ENCODE measurements at regions of chr14 and their contacts with region 1.

Region 1: DNA sequence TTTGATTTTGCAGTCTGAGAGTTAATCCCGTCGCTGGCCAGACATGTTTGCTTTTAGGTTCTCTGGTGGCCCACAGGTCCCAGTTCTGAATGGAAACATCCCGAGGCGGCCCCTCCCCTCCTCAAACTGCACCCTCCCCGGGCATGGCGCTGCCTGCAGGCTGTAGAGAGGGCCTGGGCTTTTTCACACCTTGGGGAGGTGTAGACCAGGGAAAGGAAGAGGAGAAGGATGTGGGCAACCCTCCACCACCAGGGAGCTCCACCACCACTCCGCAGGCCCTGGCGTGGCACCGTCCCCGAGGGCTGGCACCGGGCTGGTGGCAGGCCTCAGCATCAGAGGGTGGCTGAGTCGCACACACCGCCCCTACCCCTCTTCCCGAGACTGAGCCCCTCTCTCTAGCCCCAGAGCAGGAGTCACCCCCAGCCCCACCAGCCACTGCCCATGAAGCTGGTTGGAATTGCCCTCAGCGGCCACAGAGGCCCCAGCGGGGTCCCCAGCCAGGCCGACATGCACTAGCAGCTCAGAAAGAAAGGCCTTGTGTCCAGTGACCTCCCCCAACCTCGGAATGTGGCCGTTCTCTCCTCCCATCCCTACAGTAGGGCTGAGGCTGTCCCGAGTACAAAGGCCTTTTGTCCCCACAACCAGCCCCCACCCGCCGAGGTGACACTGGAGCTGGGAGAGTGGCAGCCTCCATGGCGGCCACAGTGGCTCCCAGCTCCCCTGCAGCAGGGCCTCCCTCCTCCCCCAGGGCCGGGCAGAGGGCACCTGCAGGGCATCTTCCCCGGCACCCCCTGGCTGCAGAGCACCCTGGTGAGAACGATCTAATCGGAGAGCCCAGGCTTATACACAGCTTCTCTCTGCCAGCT is 23.5 kb upstream of the INF2 start:
- DNase-seq: peak; percentile 67
- H3K4me3 Mint-ChIP-seq: no peak overlapping the region
- H3K27ac Mint-ChIP-seq: no peak overlapping the region
- H3K4me1 Mint-ChIP-seq: peaks cover 22% of the 10 kb centered on the region
- H3K27me3 Mint-ChIP-seq: peaks cover 10% of the 10 kb centered on the region

Region 2: DNA sequence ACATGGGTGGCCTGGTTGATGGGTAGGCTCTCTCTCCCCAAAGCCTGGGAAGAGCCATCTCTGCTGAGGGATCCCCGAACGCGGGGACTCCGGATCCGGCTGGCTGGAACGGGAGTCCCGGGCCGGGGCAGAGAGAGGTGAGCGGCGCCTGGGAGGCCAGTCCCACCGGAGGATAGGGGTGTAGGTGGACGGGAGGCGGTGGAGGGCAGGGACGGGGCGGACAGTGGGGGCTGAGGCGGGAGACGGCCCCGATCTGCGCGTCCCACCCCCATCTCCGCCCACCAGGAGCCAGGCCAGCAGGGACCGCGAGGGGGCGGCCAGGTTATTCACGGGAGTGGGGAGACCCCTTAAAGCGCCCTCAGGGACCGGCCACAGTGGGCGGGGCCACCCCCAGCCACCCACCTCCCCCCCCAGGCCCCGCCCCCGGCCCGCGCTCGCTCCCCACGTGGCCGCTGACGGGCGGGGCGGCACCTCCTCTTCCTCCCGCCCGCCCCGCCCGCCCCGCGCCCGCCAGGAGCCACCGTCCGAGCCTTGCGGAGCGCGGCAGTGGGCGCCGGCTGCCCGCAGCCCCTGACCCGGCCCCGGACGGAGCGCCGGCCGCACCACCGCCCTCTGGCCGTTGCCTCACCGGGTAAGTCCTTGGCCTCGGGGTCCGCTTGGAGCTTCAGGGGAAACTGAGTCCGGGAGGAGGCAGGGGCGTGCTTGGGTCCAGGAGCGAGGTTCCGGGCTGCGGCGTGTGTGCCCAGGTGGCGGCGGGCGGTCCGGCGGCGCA is 23.4 kb after region 1 on chr14 and contains the start of gene INF2:
- CTCF ChIA-PET with region 1: interaction called, 5 read pairs
- POLR2A ChIA-PET with region 1: no interaction called
- intact Hi-C with region 1: loop called (anchors 1 kb)
- DNase-seq: peak; percentile 61
- H3K4me3 Mint-ChIP-seq: peak within 1 kb of the TSS; percentile 78
- H3K27ac Mint-ChIP-seq: no peak within 1 kb of the TSS
- H3K4me1 Mint-ChIP-seq: peaks cover 54% of the 10 kb centered on the region
- H3K27me3 Mint-ChIP-seq: no peaks in the 10 kb centered on the region
- total RNA-seq, gene INF2: 66.7 to 71.5 TPM

Region 3: DNA sequence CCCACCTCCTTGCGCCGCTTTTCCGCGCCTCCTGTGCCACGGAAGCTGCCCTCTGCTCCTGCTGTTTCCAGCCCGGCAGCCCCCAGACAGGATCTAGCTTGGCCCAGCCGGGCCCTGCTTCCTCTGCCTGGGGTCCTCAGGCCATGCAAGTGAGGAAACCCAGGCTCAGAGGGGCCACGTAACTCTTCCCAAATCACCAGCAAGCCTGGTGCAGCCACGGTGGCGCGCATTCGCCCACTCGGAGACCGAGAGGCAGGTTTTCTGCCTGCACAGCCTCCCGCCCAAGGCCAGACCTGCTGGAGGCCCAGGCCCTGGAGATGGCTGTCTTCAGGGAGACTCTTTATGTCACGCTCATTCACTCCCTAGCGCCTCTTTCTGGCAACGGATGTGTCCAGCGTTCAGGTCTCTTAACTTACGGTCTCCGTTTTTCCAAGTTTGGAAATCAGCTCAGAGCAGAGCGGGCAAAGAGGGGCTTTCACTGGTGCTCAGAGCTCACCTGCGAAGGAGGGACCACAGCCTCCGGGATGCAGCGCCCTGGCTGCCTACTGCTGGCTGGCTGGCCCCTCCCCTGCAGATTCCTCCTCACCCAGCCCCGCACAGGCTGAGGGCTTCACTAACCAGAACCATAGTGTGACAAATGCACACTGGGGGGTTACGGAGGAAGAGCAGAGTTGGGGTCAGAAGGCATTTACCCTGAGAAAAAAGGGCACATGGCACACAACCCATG is 178.6 kb after region 1 on chr14:
- CTCF ChIA-PET with region 1: no interaction called
- POLR2A ChIA-PET with region 1: no interaction called
- intact Hi-C with region 1: no loop called
- DNase-seq: no peak
- H3K4me3 Mint-ChIP-seq: no peak overlapping the region
- H3K27ac Mint-ChIP-seq: no peak overlapping the region
- H3K4me1 Mint-ChIP-seq: no peaks in the 10 kb centered on the region
- H3K27me3 Mint-ChIP-seq: peaks cover 41% of the 10 kb centered on the region